Activated CD4-positive, alpha-beta T cell treated with anti-CD3 and anti-CD28 coated beads, Interleukin-2, amount 10 ng/mL, durations not matched to agents 24 days and 14 days (primary cell): ENCODE measurements at regions of chr1 and their contacts with region 1.

Region 1: DNA sequence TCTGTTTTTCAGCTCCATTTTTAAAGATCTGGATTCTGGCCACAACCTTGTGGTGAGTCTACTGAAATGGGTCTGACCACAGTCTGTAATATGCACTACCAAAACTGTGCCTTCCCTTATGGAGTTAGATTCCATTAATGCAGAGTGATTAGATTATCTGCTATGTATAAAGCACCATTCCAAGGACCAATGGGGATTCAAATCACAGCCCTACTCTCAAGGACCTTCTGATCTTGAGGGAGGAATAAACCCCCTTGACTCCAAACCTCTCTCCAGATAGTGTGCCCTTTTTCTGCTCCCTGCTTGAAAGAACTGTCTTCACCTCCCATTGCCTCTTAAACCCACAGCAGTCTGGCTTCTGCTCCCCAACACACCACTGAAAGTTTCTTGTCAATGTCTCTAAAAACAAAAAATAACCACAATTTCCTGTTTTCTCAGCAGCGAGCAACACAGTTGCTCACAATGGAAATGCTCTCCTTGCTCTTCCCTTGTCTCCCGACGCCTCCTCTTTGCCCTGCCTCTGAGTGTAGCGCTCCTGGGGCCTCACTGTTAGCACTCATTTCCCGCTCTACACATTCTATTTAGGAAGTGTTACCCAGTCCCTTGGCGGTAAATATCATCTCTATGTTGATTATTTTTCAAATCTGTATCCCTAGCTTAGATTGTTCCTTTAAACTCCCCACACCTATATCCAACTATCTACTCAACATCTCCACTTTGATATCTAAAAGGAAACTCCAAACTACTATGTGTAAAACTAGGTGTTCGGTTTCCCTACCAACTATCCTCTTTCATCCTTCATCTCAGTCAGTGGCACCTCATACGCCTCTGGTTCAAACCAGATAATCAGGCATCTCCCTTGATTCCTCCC is 13.6 kb downstream of the PCNX2 start:
- DNase-seq: peak; percentile 84
- H3K4me3 Mint-ChIP-seq: peak overlapping the region; percentile 60
- H3K27ac Mint-ChIP-seq: peak overlapping the region; percentile 80
- H3K4me1 Mint-ChIP-seq: peaks cover 46% of the 10 kb centered on the region
- H3K27me3 Mint-ChIP-seq: no peaks in the 10 kb centered on the region

Region 2: GRCh38 chr1:233197940-233198339 is 84.0 kb before region 1 on chr1:
- intact Hi-C with region 1: no loop called
- DNase-seq: no peak
- H3K4me3 Mint-ChIP-seq: no peak overlapping the region
- H3K27ac Mint-ChIP-seq: no peak overlapping the region
- H3K4me1 Mint-ChIP-seq: peaks cover 2% of the 10 kb centered on the region
- H3K27me3 Mint-ChIP-seq: no peaks in the 10 kb centered on the region

Region 3: GRCh38 chr1:233269656-233270055 is 12.3 kb before region 1 on chr1:
- intact Hi-C with region 1: loop called (anchors 2 kb)
- DNase-seq: no peak
- H3K4me3 Mint-ChIP-seq: no peak overlapping the region
- H3K27ac Mint-ChIP-seq: no peak overlapping the region
- H3K4me1 Mint-ChIP-seq: peaks cover 31% of the 10 kb centered on the region
- H3K27me3 Mint-ChIP-seq: no peaks in the 10 kb centered on the region

Region 4: DNA sequence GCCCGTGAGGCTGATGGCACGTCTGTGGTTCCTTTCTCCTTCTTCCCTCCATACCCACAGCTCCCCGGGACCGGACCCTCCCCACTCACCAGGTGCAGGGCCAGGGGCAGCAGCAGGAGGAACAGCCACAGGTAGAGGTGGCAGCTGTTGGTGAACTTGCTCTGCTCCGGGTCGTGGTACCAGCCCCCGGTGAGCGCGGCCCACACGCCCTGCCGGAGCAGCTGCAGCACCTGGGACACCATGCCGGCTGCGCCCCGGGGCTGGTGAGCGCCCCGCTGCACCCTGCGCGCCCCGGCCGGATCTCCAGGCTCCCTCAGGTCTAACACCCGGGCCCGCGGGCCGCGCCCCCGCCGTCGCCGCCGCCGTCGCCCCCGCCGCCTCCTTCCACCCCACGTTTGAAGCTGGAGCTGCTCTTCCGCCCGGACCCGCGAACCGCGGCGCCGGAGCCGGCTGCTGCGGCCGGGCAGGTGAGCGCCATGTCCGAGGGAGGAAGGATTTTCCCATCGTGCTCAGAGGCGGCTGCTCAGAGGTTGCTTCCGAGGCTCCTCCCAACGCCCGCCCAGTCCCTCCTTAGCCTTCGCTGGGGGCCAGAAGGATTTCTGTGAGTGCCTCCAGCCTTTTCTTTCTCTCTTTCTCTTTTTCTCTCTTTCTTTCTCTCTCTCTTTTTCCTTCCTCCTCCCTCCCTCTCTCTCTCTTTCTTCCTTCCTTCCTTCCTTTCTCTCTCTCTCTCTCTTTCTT is 13.5 kb after region 1 on chr1 and contains the start of gene PCNX2:
- intact Hi-C with region 1: loop called (anchors 1 kb)
- DNase-seq: peak; percentile 89
- H3K4me3 Mint-ChIP-seq: peak within 1 kb of the TSS; percentile 97
- H3K27ac Mint-ChIP-seq: peak within 1 kb of the TSS; percentile 90
- H3K4me1 Mint-ChIP-seq: peaks cover 31% of the 10 kb centered on the region
- H3K27me3 Mint-ChIP-seq: peaks cover under 1% of the 10 kb centered on the region
- total RNA-seq, gene PCNX2: 25.0 and 29.5 TPM in 2 replicates

Region 5: DNA sequence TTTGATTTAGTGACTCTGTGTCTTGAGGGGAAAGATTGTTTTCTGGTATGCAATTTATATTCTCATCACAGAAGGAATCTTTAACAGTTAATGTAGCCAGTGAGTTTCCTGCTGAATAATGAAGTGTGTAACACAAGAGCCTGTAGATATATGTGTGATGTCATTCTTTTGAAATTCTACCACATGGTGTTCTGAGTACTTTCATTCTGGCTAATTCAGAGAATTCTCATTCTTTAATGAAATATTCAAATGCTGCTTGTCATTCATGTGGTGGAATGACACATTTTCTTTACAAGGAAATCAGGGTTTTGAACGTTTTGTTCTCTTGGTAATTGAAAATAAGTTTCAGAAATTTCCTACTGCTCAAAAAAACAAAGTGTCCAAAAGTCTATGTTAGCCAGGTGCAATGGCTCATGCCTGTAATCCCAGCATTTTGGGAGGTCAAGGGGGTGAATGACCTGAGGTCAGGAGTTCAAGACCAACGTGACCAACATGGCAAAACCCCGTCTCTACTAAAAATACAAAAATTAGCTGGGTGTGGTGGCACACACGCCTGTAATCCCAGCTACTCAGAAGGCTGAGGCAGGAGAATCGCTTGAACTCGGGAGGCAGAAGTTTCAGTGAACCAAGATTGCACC is 125.2 kb after region 1 on chr1:
- intact Hi-C with region 1: loop called (anchors 5 kb)
- DNase-seq: no peak
- H3K4me3 Mint-ChIP-seq: peak overlapping the region; percentile 15
- H3K27ac Mint-ChIP-seq: peak overlapping the region; percentile 54
- H3K4me1 Mint-ChIP-seq: peaks cover 21% of the 10 kb centered on the region
- H3K27me3 Mint-ChIP-seq: peaks cover 15% of the 10 kb centered on the region